PC-3 (cell line): ENCODE measurements at regions of chr6 and their contacts with region 1.

Region 1: GRCh38 chr6:151661928-151662327 is 145.6 kb upstream of the ESR1 start:
- DNase-seq: peak; percentile 10
- ATAC-seq: no peak
- H3K4me3 ChIP-seq: no peak overlapping the region
- H3K27ac ChIP-seq: no peak overlapping the region
- H3K4me1 ChIP-seq: peaks cover 14% of the 10 kb centered on the region
- H3K27me3 ChIP-seq: no peaks in the 10 kb centered on the region
- CTCF ChIP-seq: peak; percentile 52

Region 2: GRCh38 chr6:151440930-151441329 is 221.0 kb before region 1 on chr6:
- CTCF ChIA-PET with region 1: no interaction called
- POLR2A ChIA-PET with region 1: no interaction called
- intact Hi-C with region 1: loop called (anchors 5 kb)
- DNase-seq: no peak
- ATAC-seq: no peak
- H3K4me3 ChIP-seq: no peak overlapping the region
- H3K27ac ChIP-seq: no peak overlapping the region
- H3K4me1 ChIP-seq: peaks cover 14% of the 10 kb centered on the region
- H3K27me3 ChIP-seq: no peaks in the 10 kb centered on the region
- CTCF ChIP-seq: peak; percentile 49